Posterior cingulate gyrus (tissue), 11 donors: ENCODE measurements at regions of chr4 and their contacts with region 1.

Region 1: DNA sequence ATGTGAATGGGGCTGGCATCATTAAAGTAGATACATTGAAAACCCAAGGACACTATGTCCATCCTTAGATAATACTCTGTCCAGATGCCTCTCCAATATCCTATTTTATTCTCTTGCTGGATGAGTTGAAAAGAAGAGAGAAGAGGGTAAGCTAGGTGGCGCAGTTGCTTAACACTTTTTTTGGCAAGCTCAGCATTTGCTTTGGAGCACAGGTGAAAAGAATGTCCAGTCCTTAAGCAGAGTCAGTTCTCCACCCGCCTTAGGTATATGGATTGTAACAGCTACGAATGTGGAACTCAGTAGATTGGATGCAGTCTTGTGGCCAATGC is 208.4 kb downstream of the NWD2 start:
- DNase-seq: peak in 4 of 10 donors; percentile 32 to 70 (median 50)

Region 2: DNA sequence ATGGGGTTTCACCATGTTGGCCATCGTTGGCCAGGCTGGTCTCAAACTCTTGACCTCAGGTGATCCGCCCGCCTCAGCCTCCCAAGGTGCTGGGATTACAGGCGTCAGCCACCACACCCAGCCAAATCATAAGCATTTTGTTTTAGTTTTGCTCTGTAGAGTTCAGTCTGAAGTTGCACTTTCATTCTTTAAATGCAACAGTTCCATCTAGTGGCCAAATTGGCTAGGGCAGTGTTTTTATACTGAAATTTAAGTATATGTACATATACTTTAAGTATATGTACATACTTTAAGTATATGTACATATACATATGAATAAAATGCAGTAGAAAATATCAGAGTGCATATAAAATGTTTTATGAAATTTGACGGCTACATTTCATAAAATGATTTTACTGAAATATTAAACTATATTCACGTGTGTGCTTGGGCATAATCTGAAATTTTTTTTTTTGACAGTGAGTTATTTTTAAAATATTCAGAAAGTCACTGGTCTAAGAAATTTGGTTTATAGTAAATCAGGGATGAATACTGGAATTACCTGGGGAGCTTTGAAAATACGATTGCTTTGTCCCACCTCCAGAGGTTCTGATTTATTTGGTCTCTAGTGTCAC is 62.8 kb before region 1 on chr4:
- intact Hi-C with region 1: no loop called
- DNase-seq: peak in 1 of 10 donors; percentile 75

Region 3: GRCh38 chr4:37568481-37568880 is 115.6 kb after region 1 on chr4:
- intact Hi-C with region 1: loop called (anchors 1 kb)
- DNase-seq: no peak

Region 4: GRCh38 chr4:37749398-37749988 is 296.6 kb after region 1 on chr4:
- intact Hi-C with region 1: no loop called
- DNase-seq: no peak

Region 5: DNA sequence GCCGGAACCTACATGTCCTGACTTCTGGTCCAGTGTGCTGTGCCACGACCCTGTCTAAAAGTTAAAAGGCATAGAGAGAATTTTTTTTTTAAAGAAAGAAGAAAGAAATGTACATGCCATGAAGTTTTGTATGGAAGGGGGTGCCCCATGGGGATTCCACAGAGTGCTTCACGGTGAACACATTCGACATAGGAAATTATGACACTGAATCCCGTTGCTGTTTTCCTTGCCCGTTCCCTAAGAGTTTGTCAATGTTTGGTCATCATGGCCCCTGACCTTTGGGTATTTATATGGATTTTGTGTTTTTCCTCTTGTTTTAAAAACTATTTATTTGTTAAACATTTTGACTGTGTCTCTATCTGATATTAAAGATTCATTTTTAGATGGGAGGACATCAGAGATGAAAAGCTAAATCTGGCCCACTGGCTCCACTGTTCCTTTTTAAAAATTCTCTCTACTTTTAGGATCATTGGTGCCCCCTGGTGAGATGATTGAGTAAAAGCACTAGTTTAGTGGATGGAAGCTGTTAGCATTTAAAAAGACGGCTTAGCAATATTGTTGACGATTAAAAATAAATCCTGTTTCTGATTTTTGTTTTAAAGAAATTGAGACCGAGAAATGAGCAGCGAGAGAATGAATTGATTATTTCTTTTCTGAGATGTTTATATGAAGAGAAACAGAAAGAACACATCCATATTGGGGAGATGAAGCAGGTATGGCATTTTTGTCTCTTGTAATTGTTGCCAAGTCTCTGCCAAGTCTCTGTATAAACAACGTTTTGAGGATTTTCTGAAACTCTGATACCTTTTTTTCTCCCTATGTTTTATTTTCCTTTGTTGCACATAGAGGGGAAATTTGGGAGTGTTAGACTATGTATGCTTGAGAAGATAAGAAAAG is 582.3 kb after region 1 on chr4:
- intact Hi-C with region 1: loop called (anchors 10 kb)
- DNase-seq: no peak